CD4-positive, alpha-beta memory T cell (primary cell): ENCODE measurements at regions of chr4 and their contacts with region 1.

Region 1: DNA sequence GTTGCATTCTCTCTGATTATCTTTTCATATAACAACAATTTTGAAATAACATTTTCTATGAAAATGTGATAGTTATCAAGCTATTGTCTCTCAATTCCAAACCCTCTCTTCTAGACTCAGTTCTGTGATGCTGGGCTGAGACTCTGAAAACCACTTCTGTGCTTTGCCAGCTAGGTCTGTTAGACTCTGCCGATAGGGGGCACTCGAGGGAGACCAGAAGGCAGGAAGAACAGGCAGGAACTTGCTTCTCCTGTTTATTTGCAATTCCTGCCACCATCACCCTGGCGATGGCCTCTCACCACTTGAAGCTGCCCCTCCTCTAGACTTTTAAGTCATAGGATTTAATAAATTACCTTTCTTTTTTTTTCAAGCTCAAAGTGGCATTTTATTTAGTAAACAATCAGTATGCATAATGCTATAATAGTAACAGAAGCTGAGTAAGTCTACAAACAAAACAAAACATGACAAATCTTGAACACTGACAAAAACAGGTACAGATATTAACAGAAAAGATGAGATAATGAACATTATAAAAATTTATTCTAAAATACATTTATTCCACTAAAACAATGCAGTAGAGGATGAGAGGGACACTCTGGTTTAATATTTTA is 49.7 kb downstream of the RASL11B start:
- DNase-seq: peak; percentile 45 to 57 (median 50)
- H3K4me3 ChIP-seq: no peak overlapping the region
- H3K4me3 Mint-ChIP-seq: no peak overlapping the region
- H3K27ac ChIP-seq: no peak overlapping the region
- H3K27ac Mint-ChIP-seq: peak overlapping the region in 1 of 7 donors; percentile 42
- H3K4me1 ChIP-seq: no peaks in the 10 kb centered on the region
- H3K4me1 Mint-ChIP-seq: peaks cover 0 to 7% (median 2%) of the 10 kb centered on the region in 4 donors
- H3K27me3 ChIP-seq: no peaks in the 10 kb centered on the region
- H3K27me3 Mint-ChIP-seq: peaks cover 0 to 1% of the 10 kb centered on the region in 2 donors

Region 2: DNA sequence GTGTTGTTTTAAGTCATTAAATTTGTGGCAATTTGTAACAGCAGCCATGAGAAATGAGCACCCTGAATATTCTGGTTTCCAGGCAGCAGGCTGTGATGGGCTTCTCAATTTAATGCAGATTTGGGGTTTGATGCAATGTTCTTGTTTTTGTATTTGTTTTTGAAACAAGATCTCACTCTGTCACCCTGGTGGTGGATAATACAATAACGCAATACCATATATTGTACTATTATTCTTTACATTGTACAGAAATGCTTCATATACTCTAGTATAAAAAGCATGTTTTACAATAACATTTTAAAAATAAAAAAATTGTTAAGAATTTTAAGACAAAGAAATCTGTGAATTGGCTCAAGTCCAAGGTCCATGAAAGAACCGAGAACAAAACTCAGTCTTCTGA is 381.8 kb before region 1 on chr4:
- CTCF ChIA-PET with region 1: no interaction called
- POLR2A ChIA-PET with region 1: no interaction called
- intact Hi-C with region 1: no loop called
- DNase-seq: no peak
- H3K4me3 ChIP-seq: no peak overlapping the region
- H3K4me3 Mint-ChIP-seq: no peak overlapping the region
- H3K27ac ChIP-seq: no peak overlapping the region
- H3K27ac Mint-ChIP-seq: no peak overlapping the region
- H3K4me1 ChIP-seq: no peaks in the 10 kb centered on the region
- H3K4me1 Mint-ChIP-seq: no peaks in the 10 kb centered on the region
- H3K27me3 ChIP-seq: no peaks in the 10 kb centered on the region
- H3K27me3 Mint-ChIP-seq: peaks cover 2 to 5% of the 10 kb centered on the region in 2 donors

Region 3: GRCh38 chr4:52833936-52834525 is 77.8 kb before region 1 on chr4:
- CTCF ChIA-PET with region 1: no interaction called
- POLR2A ChIA-PET with region 1: no interaction called
- intact Hi-C with region 1: no loop called
- DNase-seq: no peak
- H3K4me3 ChIP-seq: no peak overlapping the region
- H3K4me3 Mint-ChIP-seq: no peak overlapping the region
- H3K27ac ChIP-seq: no peak overlapping the region
- H3K27ac Mint-ChIP-seq: no peak overlapping the region
- H3K4me1 ChIP-seq: no peaks in the 10 kb centered on the region
- H3K4me1 Mint-ChIP-seq: no peaks in the 10 kb centered on the region
- H3K27me3 ChIP-seq: no peaks in the 10 kb centered on the region
- H3K27me3 Mint-ChIP-seq: peaks cover 8 to 11% of the 10 kb centered on the region in 2 donors

Region 4: DNA sequence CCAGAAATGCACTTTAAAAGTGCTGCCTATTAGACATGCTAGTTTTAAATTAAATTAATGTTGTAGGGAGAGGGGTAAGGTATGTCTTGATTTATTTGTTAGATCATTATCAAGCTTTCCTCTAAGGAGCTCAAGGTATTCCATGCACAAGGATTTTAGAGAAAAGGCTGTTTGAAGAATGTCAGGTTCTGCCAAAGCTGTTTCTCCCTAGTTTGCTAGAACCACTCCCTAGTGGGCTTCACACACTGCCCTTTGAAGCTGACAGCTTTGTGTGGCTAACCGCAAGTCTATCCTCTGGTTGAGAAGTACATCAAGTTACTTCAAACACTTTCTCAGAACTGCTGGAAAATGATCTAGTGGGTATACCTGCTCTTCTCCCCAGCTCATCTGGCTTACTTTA is 17.3 kb before region 1 on chr4:
- CTCF ChIA-PET with region 1: interaction called, 12 read pairs
- POLR2A ChIA-PET with region 1: no interaction called
- intact Hi-C with region 1: no loop called
- DNase-seq: no peak
- H3K4me3 ChIP-seq: no peak overlapping the region
- H3K4me3 Mint-ChIP-seq: no peak overlapping the region
- H3K27ac ChIP-seq: no peak overlapping the region
- H3K27ac Mint-ChIP-seq: no peak overlapping the region
- H3K4me1 ChIP-seq: no peaks in the 10 kb centered on the region
- H3K4me1 Mint-ChIP-seq: peaks cover 0 to 3% (median 0%) of the 10 kb centered on the region in 4 donors
- H3K27me3 ChIP-seq: no peaks in the 10 kb centered on the region
- H3K27me3 Mint-ChIP-seq: no peaks in the 10 kb centered on the region

Region 5: GRCh38 chr4:52925531-52925968 is 13.8 kb after region 1 on chr4:
- CTCF ChIA-PET with region 1: interaction called, 13 read pairs
- POLR2A ChIA-PET with region 1: no interaction called
- intact Hi-C with region 1: no loop called
- DNase-seq: no peak
- H3K4me3 ChIP-seq: no peak overlapping the region
- H3K4me3 Mint-ChIP-seq: no peak overlapping the region
- H3K27ac ChIP-seq: no peak overlapping the region
- H3K27ac Mint-ChIP-seq: no peak overlapping the region
- H3K4me1 ChIP-seq: no peaks in the 10 kb centered on the region
- H3K4me1 Mint-ChIP-seq: no peaks in the 10 kb centered on the region
- H3K27me3 ChIP-seq: no peaks in the 10 kb centered on the region
- H3K27me3 Mint-ChIP-seq: no peaks in the 10 kb centered on the region

Region 6: GRCh38 chr4:52996261-52996892 is 84.6 kb after region 1 on chr4:
- CTCF ChIA-PET with region 1: no interaction called
- POLR2A ChIA-PET with region 1: no interaction called
- intact Hi-C with region 1: no loop called
- DNase-seq: no peak
- H3K4me3 ChIP-seq: no peak overlapping the region
- H3K4me3 Mint-ChIP-seq: peak overlapping the region in 1 of 8 donors; percentile 4
- H3K27ac ChIP-seq: no peak overlapping the region
- H3K27ac Mint-ChIP-seq: no peak overlapping the region
- H3K4me1 ChIP-seq: no peaks in the 10 kb centered on the region
- H3K4me1 Mint-ChIP-seq: peaks cover 0 to 2% (median 0%) of the 10 kb centered on the region in 4 donors
- H3K27me3 ChIP-seq: no peaks in the 10 kb centered on the region
- H3K27me3 Mint-ChIP-seq: no peaks in the 10 kb centered on the region